HAP-1 (cell line): ENCODE measurements at regions of chr12 and their contacts with region 1.

Region 1: DNA sequence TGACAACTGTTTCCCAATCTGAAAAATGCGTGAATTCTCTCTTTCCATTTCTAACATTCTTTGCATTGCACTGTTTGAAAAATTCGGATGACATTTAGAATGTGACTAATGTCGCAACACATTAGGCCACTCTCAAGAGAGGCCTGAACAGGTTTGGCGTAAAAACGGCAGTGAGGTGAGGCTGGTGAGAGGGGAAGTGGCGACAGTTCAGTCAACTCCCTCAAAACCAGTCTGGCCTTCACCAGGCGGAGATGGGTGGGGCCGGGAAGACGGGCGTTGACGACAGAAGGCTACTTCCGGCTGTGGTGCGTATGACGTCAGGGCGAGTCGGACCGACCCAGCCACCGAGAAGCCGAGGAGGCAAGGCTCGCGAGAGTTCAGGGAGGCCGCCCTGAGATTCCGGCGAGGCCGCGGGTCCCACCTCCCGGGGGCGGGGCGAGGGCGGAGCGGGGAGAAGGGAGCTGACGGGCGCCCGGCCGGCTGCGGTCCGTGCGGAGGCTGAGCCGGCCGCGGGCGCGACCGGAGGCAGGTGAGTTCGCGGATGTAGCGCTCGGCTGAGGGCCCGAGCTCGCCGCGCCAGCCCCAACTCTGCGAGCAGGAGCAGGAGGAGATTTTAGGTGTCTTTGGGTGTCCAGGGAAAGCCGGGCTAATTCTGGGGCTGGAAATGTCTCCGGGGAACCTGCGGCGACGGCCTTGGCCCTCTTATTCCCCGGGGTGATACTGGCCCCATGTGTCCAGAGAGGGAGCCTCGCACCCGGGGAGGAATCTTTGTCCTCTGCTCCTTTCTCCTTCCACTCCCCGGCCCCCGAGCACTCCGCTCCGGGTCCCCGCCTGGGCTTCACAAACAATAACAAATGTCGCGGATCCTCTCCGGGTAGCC is at the start of gene STK38L:
- DNase-seq: peak; percentile 88 to 99
- H3K4me3 ChIP-seq: peak within 1 kb of the TSS; percentile 71
- H3K4me1 ChIP-seq: peaks cover 25% of the 10 kb centered on the region
- H3K27me3 ChIP-seq: no peaks in the 10 kb centered on the region

Region 2: GRCh38 chr12:26832822-26833742 is 411.0 kb before region 1 on chr12 and contains the start of gene ITPR2:
- in situ Hi-C with region 1: no loop called
- DNase-seq: peak; percentile 94 to 97
- H3K4me3 ChIP-seq: peak within 1 kb of the TSS; percentile 70
- H3K4me1 ChIP-seq: peaks cover 17% of the 10 kb centered on the region
- H3K27me3 ChIP-seq: no peaks in the 10 kb centered on the region

Region 3: GRCh38 chr12:27293463-27293862 is 49.4 kb after region 1 on chr12:
- in situ Hi-C with region 1: loop called (anchors 10 kb)
- DNase-seq: peak; percentile 49 to 66
- H3K4me3 ChIP-seq: no peak overlapping the region
- H3K4me1 ChIP-seq: peaks cover 43% of the 10 kb centered on the region
- H3K27me3 ChIP-seq: no peaks in the 10 kb centered on the region

Region 4: GRCh38 chr12:27309293-27309994 is 65.4 kb after region 1 on chr12:
- in situ Hi-C with region 1: no loop called
- DNase-seq: no peak
- H3K4me3 ChIP-seq: no peak overlapping the region
- H3K4me1 ChIP-seq: no peaks in the 10 kb centered on the region
- H3K27me3 ChIP-seq: no peaks in the 10 kb centered on the region